ENCODE measurements at regions of chr1 and their contacts with region 1.

Region 1: DNA sequence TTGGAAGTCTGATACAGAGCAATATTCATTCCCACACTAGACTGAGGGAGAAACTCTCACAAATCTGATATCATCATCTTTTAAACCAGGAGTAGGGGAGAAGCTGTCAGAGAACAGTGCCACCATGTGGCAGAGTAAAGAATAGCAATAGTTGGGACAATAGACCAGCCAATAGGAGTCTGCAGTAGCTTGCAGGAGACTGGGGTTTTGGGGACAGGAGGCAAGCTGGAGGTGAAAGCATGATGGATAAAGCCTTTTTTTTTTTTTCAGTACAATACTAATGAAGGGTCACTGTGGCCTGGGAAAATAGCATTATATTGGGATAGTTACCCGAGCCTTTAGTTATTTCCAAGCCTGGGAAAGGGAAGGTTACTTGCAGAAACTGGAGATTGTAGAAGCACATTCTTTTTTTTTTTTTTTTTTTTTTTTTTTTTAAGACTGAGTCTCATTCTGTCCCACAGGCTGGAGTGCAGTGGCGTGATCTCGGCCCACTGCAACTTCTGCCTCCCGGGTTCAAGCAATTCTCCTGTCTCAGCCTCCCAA is 120.7 kb downstream of the S1PR1 start:
- DNase-seq: peak; percentile 89
- ATAC-seq: peak; percentile 98
- H3K4me3 ChIP-seq: no peak overlapping the region
- H3K27ac ChIP-seq: no peak overlapping the region
- H3K4me1 ChIP-seq: no peaks in the 10 kb centered on the region
- H3K27me3 ChIP-seq: peaks cover 49% of the 10 kb centered on the region
- CTCF ChIP-seq: peak; percentile 92

Region 2: GRCh38 chr1:100921109-100921706 is 436.3 kb before region 1 on chr1:
- CTCF ChIA-PET with region 1: no interaction called
- POLR2A ChIA-PET with region 1: no interaction called
- intact Hi-C with region 1: loop called (anchors 5 kb)
- DNase-seq: peak; percentile 79
- ATAC-seq: no peak
- H3K4me3 ChIP-seq: no peak overlapping the region
- H3K27ac ChIP-seq: no peak overlapping the region
- H3K4me1 ChIP-seq: peaks cover 7% of the 10 kb centered on the region; the same call in 1 of the 2 replicates
- H3K27me3 ChIP-seq: no peaks in the 10 kb centered on the region
- CTCF ChIP-seq: peak; percentile 67

Region 3: GRCh38 chr1:101203820-101204540 is 153.5 kb before region 1 on chr1:
- CTCF ChIA-PET with region 1: no interaction called
- POLR2A ChIA-PET with region 1: no interaction called
- intact Hi-C with region 1: no loop called
- DNase-seq: peak; percentile 5
- ATAC-seq: no peak
- H3K4me3 ChIP-seq: no peak overlapping the region
- H3K27ac ChIP-seq: no peak overlapping the region
- H3K4me1 ChIP-seq: peaks cover 5% of the 10 kb centered on the region; the same call in 1 of the 2 replicates
- H3K27me3 ChIP-seq: no peaks in the 10 kb centered on the region
- CTCF ChIP-seq: no peak

Region 4: GRCh38 chr1:101309334-101310311 is 47.9 kb before region 1 on chr1:
- CTCF ChIA-PET with region 1: interaction called, 31 read pairs
- POLR2A ChIA-PET with region 1: no interaction called
- intact Hi-C with region 1: loop called (anchors 1 kb)
- DNase-seq: peak; percentile 57
- ATAC-seq: peak; percentile 67
- H3K4me3 ChIP-seq: no peak overlapping the region
- H3K27ac ChIP-seq: no peak overlapping the region
- H3K4me1 ChIP-seq: no peaks in the 10 kb centered on the region
- H3K27me3 ChIP-seq: peaks cover 78% of the 10 kb centered on the region
- CTCF ChIP-seq: peak; percentile 87

Measured in PC-3 (cell line).